ENCODE measurements at regions of chr1 and their contacts with region 1.

Region 1: GRCh38 chr1:174815036-174815435 is 184.7 kb upstream of the CACYBP start:
- DNase-seq: peak; percentile 49
- ATAC-seq: peak; percentile 94
- H3K4me3 Mint-ChIP-seq: no peak overlapping the region
- H3K27ac Mint-ChIP-seq: peak overlapping the region; percentile 11
- H3K4me1 Mint-ChIP-seq: peaks cover 23% of the 10 kb centered on the region
- H3K27me3 Mint-ChIP-seq: no peaks in the 10 kb centered on the region

Region 2: DNA sequence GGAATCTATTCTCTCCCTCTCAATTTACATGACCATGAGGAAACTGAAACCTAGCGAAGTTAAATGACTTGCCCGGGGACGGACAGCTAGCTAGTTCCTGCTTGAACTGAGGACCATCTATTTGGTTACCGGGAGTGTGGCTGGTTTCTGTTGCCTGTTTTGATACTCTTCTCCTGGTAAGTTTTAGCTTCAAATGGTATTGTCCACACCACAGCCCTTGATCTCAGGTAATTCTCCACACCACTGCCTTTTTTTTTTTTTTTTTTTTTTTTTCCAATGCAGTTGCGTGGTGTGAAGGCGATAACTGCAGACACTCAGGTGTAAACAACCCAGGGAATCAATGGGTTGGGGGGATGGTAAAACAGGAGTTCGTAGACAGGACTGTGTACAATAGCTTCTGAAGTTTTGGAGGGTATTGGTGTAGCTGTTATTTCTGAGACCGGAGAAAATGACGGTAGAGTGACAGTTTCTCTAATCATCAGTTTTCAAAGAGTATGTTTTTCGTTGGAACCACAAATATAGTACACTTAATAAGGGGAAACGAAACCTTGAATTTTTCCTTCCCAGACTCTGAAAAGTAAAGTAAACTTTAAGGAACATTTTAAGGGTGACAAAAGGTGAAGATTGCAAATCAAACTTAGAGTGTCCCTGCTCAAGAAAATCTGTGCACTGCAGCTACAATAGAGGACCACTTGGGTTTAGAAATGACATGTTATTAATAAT is 59.5 kb after region 1 on chr1:
- CTCF ChIA-PET with region 1: no interaction called
- POLR2A ChIA-PET with region 1: no interaction called
- intact Hi-C with region 1: loop called (anchors 5 kb)
- DNase-seq: no peak
- ATAC-seq: no peak
- H3K4me3 Mint-ChIP-seq: peak overlapping the region; percentile 41
- H3K27ac Mint-ChIP-seq: peak overlapping the region; percentile 37
- H3K4me1 Mint-ChIP-seq: peaks cover 20% of the 10 kb centered on the region
- H3K27me3 Mint-ChIP-seq: no peaks in the 10 kb centered on the region

Region 3: GRCh38 chr1:174912264-174912663 is 97.2 kb after region 1 on chr1:
- CTCF ChIA-PET with region 1: no interaction called
- POLR2A ChIA-PET with region 1: no interaction called
- intact Hi-C with region 1: loop called in 1 of 2 experiments (anchors 5 kb)
- DNase-seq: peak; percentile 65
- ATAC-seq: peak; percentile 85
- H3K4me3 Mint-ChIP-seq: no peak overlapping the region
- H3K27ac Mint-ChIP-seq: peak overlapping the region; percentile 63
- H3K4me1 Mint-ChIP-seq: peaks cover 57% of the 10 kb centered on the region
- H3K27me3 Mint-ChIP-seq: no peaks in the 10 kb centered on the region